HEK293 (cell line): ENCODE measurements at regions of chr11 and their contacts with region 1.

Region 1: GRCh38 chr11:72430741-72431570 is 3.4 kb downstream of the CLPB start:
- H3K4me3 ChIP-seq: no peak overlapping the region
- H3K27ac ChIP-seq: no peak overlapping the region
- H3K4me1 ChIP-seq: no peaks in the 10 kb centered on the region
- CTCF ChIP-seq: peak; percentile 67; the same call in 1 of the 2 replicates

Region 2: DNA sequence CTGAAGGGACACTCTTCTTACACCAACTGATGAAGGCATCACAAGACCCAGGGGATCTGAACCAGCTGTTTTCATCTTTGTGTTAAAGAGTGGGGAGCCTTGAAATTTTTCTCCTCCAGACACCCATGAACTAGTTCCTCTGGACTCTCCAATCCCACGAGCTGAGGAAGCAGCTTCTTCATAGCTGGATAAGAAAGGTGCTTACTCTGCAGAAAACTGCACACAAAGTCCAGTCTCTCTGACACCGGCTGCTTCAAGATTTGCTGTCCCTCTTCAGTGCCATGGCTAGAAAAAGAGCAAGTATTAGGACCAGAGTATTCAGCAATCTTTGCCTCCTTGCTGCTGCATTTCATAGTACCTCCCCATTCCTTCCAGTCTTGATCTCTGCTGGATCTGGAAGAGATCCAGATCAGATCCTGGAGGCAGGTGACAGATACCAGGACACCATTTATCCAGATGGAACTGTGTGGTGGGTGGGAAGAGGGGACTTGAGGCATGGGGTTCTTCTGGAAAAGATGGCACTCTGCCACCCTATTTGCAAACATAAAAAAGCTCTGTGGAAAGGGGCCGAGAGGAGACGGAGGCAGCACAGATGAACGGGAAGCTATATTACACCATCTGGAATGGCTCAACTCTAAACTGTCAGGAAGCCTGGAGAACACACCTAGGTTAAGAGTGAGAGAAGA is 406.7 kb before region 1 on chr11:
- CTCF ChIA-PET with region 1: interaction called, 28 read pairs
- POLR2A ChIA-PET with region 1: interaction called, 3 read pairs
- H3K4me3 ChIP-seq: no peak overlapping the region
- H3K27ac ChIP-seq: no peak overlapping the region
- H3K4me1 ChIP-seq: no peaks in the 10 kb centered on the region
- CTCF ChIP-seq: no peak

Region 3: DNA sequence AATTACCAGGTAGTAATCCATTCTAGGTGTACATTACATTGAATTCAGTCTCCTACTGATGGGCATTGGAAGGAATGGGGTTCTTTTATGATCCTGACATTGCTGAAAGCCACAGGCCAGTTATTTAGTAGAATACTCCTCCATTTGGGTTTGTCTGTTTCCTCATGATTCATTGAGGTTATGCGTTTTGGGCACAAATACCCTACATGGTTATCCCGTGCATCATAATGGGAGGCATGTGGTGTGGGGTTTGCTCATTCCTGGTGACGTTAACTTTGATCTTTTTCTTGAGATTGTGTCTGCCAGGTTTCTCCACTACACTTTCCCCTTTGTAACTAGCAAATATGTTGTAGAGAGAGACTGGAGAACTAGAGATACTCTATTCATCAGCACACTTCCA is 289.9 kb before region 1 on chr11:
- CTCF ChIA-PET with region 1: interaction called, 12 read pairs
- POLR2A ChIA-PET with region 1: no interaction called
- H3K4me3 ChIP-seq: no peak overlapping the region
- H3K27ac ChIP-seq: no peak overlapping the region
- H3K4me1 ChIP-seq: no peaks in the 10 kb centered on the region
- CTCF ChIP-seq: no peak

Region 4: DNA sequence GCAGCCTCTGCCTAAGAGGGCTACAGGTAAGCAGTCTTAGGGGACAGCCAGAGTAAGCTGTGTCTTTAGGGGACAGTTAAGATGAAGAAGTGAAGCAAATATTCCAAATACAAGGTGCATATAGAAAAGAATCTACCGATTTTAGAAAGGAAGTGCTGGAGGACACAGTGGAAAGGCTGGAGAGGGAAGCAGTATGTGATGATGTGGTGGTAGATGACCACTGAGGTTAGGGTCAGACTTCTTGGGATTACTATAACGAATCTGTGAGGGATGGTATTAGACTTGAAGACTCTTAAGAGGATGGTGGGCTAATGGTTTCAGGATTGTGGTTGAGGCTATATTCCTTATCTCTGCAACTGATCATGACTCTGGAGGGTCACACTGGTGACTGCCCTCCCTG is 147.0 kb before region 1 on chr11:
- CTCF ChIA-PET with region 1: interaction called, 19 read pairs
- POLR2A ChIA-PET with region 1: no interaction called
- H3K4me3 ChIP-seq: no peak overlapping the region
- H3K27ac ChIP-seq: no peak overlapping the region
- H3K4me1 ChIP-seq: no peaks in the 10 kb centered on the region
- CTCF ChIP-seq: no peak

Region 5: GRCh38 chr11:72328366-72329224 is 102.4 kb before region 1 on chr11:
- CTCF ChIA-PET with region 1: interaction called, 15 read pairs
- POLR2A ChIA-PET with region 1: interaction called, 4 read pairs
- H3K4me3 ChIP-seq: no peak overlapping the region
- H3K27ac ChIP-seq: no peak overlapping the region
- H3K4me1 ChIP-seq: no peaks in the 10 kb centered on the region
- CTCF ChIP-seq: no peak

Region 6: GRCh38 chr11:72413914-72414628 is 16.9 kb before region 1 on chr11:
- CTCF ChIA-PET with region 1: interaction called, 76 read pairs
- POLR2A ChIA-PET with region 1: interaction called, 4 read pairs
- H3K4me3 ChIP-seq: no peak overlapping the region
- H3K27ac ChIP-seq: no peak overlapping the region
- H3K4me1 ChIP-seq: peaks cover 5% of the 10 kb centered on the region; the same call in 1 of the 2 replicates
- CTCF ChIP-seq: peak; percentile 76